ENCODE measurements at regions of chr4 and their contacts with region 1.

Region 1: GRCh38 chr4:174365018-174365587 is 81.4 kb downstream of the CEP44 start:
- DNase-seq: no peak
- ATAC-seq: no peak

Region 2: DNA sequence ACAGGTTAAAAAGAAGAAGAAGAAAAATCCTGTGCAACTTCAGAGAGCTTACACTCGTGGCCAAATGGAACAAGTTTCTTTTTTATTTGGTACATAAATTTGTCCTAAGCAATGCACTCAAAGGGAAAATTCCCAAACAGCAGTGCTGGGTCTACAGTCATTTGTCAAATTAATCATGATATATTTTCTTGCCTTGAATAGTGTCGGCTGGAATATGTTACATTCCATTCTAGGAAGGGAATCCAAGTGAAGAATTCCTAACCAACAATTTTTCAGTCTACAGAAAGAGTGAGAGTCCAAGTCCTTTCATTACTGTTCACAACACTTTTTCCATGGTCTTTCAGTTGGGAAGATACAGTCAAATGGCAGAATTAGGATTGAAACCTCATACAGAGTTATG is 899.0 kb before region 1 on chr4:
- intact Hi-C with region 1: no loop called
- DNase-seq: no peak
- ATAC-seq: no peak

Region 3: DNA sequence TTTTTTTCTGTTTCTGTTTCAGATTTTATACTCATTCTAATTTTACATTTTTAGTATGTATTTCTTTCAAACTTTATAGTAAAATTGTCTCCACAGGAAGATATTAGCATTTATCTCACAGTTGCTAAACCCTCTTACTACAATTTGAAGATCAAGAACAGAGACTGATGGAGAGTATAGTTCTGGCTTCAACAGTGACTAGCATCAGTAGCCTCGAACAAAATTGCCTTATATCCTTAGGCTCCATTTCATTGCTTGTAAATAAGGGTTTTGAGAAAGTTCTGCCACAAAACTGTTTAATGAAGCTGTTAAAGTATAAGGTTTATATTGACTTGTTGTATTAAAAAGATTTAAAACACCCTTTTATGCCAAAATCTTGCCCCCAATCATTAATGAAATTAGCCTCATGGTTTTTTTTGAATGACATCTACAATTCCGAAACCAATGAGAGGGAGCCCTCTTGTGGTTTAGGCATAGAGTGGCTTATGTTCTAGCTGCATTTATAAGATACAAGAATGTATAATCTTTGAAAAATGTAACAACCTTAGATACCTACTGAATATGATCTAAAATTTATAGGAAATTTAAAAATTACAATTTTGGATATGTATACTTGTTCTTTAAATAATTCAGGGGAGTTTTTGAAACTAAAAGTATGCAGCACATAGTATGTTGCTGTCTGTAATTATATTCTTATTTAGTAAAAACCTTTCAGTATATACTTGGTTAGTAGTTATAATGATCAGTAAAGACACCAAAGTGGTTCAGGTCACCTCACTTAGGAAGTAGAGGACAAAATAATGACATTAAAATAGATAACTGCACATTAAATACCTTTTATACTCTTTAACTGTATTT is 267.0 kb after region 1 on chr4:
- intact Hi-C with region 1: loop called (anchors 1 kb)
- DNase-seq: no peak
- ATAC-seq: no peak

Region 4: DNA sequence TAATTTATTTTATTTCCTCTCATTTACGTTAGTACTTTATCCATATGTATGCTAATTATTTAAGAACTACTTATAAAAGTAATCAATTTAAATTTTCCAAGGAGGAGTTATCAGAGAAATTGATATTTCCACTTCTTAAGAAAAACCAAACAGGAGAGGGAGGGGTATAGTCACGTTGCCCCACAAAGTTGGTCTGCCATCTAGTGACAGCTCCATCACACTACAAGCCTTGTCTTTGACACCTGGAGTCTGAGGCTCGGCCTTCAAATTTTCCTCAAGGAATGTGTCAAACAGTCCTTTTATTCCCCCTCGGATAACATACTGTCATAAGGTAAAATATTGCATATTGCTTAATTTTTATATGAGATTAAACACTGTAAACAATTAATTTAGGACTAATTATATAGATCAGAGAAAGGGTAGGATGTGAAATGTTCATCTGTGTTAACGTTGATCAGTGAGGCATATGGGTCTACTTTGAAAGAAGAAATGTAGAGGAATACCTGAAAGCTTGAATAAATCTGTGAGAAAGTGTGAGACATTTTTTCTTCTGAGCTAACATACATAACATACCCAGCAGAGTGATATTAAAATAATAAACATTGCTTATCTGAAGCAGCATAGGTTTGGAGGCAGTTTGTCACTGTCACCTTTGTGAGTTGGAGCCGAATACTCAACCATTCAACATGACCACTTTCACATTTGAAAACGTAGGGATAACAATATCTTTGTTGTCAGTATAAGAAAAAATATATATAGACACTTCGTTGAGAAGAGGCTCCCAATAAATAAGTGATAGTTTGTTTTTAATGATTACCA is 349.5 kb after region 1 on chr4:
- intact Hi-C with region 1: loop called (anchors 10 kb)
- DNase-seq: no peak
- ATAC-seq: no peak

Measured in Right ventricle myocardium inferior (tissue), 1 donor.